ENCODE measurements at regions of chr2 and their contacts with region 1.

Region 1: DNA sequence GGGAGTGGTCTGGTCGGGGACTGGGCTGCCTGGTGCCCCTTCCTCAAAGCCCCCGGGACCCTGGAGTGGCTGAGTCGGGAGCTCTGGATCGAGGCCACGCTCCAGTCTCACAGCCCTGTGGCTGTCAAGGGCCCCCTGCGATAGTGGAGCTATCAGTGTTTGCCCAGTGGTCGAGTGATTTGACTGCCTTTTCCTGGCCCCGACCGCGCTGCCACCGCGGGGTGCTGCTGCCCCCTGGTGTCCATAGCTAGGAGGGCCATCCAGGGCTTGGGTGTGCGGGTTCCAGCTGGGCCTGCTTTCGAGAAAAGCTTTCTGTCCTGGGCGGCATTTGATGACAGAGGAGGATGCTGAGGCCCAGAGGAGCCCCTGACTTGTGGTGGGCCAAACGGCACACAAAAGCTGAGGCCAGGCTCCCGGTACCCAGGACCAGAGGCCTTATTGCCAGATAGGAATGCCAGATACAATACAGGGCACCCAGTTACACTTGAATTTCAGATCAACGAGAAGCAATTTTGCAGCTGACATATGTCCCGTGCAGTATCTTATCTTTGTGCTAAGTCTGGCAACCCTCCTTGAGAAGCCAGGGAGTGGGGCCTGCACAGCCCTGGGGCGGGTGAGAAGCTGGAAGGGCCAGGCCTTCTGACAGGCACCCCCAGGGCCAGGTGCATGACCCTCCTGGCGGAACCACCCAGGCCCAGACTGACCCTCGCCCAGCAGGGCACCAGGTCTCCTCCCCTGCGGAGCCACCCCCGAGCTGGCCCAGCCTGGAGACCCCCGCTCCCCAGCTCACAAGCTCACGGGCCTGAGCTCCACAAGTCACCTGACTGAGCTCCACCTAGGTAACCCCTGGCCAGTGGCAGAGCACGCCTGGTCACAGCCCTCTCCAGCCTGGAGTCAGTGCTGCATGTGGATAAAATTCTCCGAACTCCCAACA is 13.0 kb downstream of the ODC1 start:
- DNase-seq: peak; percentile 79 to 88 (median 85)
- H3K4me3 ChIP-seq: no peak overlapping the region
- H3K27ac ChIP-seq: no peak overlapping the region
- H3K4me1 ChIP-seq: peaks cover 0 to 14% (median 11%) of the 10 kb centered on the region in 4 experiments
- H3K27me3 ChIP-seq: peaks cover 0 to 13% (median 0%) of the 10 kb centered on the region in 5 experiments

Region 2: GRCh38 chr2:10072656-10073480 is 362.3 kb before region 1 on chr2:
- CTCF ChIA-PET with region 1: interaction called, 50 read pairs
- POLR2A ChIA-PET with region 1: interaction called, 3 read pairs
- DNase-seq: peak; percentile 86 to 93 (median 90)
- H3K4me3 ChIP-seq: no peak overlapping the region
- H3K27ac ChIP-seq: no peak overlapping the region
- H3K4me1 ChIP-seq: peaks cover 0 to 4% (median under 1%) of the 10 kb centered on the region in 4 experiments
- H3K27me3 ChIP-seq: peaks cover 0 to 52% (median 19%) of the 10 kb centered on the region in 5 experiments

Region 3: DNA sequence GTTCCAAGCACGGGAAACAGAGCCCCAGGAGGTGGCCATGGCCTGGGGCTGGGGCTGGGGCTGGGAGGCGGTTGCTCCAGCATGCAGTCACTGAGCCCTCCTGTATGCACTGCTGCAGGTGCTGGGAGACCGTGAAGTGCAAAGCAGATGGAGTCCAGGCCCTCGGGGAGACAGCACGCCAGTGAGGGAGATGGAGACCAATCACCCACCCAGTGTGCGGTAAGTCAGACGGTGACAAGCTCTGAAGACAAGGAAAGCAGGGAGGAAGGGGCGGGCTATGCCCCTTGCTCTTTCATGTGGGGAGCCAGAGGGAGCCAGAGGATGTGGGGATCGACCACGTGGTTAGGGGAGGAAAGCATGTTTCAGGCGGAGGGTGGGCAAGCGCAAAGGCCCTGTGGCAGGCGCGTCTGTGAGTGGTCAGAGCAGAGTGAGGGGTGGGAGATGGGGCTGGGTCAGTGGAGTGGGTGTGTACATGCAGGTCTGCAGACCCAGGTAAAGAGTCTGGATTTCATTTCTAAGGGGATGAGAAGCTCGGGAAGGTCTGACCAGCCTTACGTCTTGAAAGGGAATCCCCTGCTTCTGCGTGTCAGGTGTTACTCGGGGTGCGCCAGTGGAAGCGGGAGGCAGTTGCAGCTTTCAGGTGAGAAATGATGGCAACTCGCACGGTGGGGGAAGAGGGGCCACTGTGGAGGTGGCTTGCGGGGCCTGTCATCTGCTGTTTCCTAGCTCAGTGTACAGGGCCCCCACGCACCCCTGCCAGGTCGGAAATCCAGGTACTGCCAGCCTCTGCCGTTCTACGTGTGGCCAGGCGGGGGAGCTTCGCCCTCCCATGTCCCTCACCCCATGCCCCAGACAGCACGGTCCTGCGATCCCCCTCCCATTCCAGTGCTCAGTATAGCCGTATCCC is 293.2 kb before region 1 on chr2:
- CTCF ChIA-PET with region 1: interaction called, 27 read pairs
- POLR2A ChIA-PET with region 1: no interaction called
- DNase-seq: peak in 1 of 3 donors; percentile 29
- H3K4me3 ChIP-seq: no peak overlapping the region
- H3K27ac ChIP-seq: no peak overlapping the region
- H3K4me1 ChIP-seq: peaks cover 0 to 5% (median 0%) of the 10 kb centered on the region in 4 experiments
- H3K27me3 ChIP-seq: no peaks in the 10 kb centered on the region

Region 4: GRCh38 chr2:10346929-10347561 is 88.1 kb before region 1 on chr2:
- CTCF ChIA-PET with region 1: interaction called, 10 read pairs
- POLR2A ChIA-PET with region 1: no interaction called
- DNase-seq: no peak
- H3K4me3 ChIP-seq: no peak overlapping the region
- H3K27ac ChIP-seq: no peak overlapping the region
- H3K4me1 ChIP-seq: peaks cover 4 to 55% (median 33%) of the 10 kb centered on the region in 4 experiments
- H3K27me3 ChIP-seq: no peaks in the 10 kb centered on the region

Region 5: GRCh38 chr2:10448208-10448645 is 13.1 kb after region 1 on chr2 and contains the start of gene ODC1:
- CTCF ChIA-PET with region 1: interaction called, 55 read pairs
- POLR2A ChIA-PET with region 1: interaction called, 13 read pairs
- DNase-seq: peak; percentile 91 to 97 (median 95)
- H3K4me3 ChIP-seq: peak within 1 kb of the TSS; percentile 48 to 87 (median 68)
- H3K27ac ChIP-seq: peak within 1 kb of the TSS in 1 of 2 experiments; percentile 80
- H3K4me1 ChIP-seq: peaks cover 12 to 28% (median 25%) of the 10 kb centered on the region in 4 experiments
- H3K27me3 ChIP-seq: no peaks in the 10 kb centered on the region